Activated T-helper 2 cell treated with anti-CD3 and anti-CD28 coated beads, Interferon-gamma antibody, Interleukin-2, Interleukin-4, amounts not matched to agents 10 μg/mL and 5 μg/mL and 100 μg/mL, durations not matched to agents 14 hours and 24 hours and 36 hours (primary cell): ENCODE measurements at regions of chr20 and their contacts with region 1.

Region 1: DNA sequence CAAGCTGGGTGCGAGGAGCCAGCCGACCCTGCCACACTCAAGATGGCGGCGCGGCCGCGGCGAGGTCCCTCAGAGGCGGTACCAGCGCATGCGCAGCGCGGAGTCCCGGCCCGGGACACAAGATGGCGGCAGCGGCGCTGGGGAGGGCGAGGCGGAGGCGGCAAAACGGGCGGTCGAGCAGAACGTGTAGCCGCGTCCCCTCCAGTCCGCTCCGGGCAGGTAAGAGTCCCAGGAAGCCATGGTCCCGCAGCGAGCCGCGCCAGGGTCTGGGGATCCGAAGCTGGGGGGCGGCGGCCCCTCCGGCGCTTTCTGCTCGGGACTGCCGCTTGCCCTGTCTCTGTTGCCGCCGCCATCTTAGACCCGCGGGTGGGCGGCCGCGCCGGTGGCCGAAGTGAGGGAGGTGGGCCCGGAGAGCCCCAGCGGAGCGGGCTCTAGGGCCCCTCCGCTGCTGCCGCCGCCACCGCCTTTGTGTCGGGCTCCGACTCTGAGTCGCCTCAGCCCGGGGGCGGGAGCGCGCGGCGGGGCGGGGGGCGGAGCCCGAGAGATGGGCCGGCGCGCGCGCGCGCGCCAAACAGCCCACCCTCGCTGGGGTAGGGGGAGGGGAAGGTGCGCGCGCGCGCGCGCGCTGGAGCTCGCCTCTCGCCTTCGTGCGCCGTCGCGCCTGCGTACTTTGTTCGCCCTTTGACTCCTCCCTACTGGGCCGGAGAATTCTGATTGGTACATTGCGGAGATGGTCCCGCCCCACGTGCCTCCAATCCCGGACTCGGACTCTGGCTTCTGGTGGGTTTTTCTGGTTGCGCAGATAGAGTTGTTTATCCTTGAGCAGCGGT is at the start of gene PCIF1:
- DNase-seq: peak; percentile 97
- H3K4me3 Mint-ChIP-seq: peak within 1 kb of the TSS; percentile 92
- H3K27ac Mint-ChIP-seq: peak within 1 kb of the TSS; percentile 94
- H3K4me1 Mint-ChIP-seq: peaks cover 25% of the 10 kb centered on the region
- H3K27me3 Mint-ChIP-seq: no peaks in the 10 kb centered on the region
- total RNA-seq, gene PCIF1: 27.5 and 28.6 TPM in 2 replicates

Region 2: DNA sequence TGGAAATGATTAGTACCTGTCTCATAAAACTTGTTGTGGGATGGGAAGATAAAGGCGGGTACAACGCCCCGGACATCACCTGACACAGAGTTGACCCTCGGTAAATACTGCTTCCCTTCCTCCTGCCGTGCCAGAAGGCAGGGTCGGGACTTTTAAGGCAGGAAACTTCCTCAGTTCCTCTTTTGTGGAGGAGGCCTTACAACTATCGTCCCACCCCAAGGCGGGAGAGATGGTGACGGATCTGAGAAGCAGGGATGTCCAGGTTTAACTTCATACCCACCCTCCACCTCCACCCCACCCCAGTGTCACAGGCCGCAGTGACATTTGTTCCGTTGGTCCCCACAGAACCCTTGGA is 142.5 kb before region 1 on chr20:
- intact Hi-C with region 1: loop called (anchors 1 kb)
- DNase-seq: no peak
- H3K4me3 Mint-ChIP-seq: peak overlapping the region; percentile 85
- H3K27ac Mint-ChIP-seq: peak overlapping the region; percentile 35
- H3K4me1 Mint-ChIP-seq: peaks cover 13% of the 10 kb centered on the region
- H3K27me3 Mint-ChIP-seq: no peaks in the 10 kb centered on the region

Region 3: GRCh38 chr20:45812157-45813020 is 122.4 kb before region 1 on chr20 and contains the start of gene UBE2C:
- intact Hi-C with region 1: loop called (anchors 1 kb)
- DNase-seq: peak; percentile 96
- H3K4me3 Mint-ChIP-seq: peak within 1 kb of the TSS; percentile 90
- H3K27ac Mint-ChIP-seq: peak within 1 kb of the TSS; percentile 80
- H3K4me1 Mint-ChIP-seq: peaks cover 24% of the 10 kb centered on the region
- H3K27me3 Mint-ChIP-seq: no peaks in the 10 kb centered on the region
- total RNA-seq, gene UBE2C: 142 and 145 TPM in 2 replicates

Region 4: GRCh38 chr20:45823949-45824835 is 110.6 kb before region 1 on chr20:
- intact Hi-C with region 1: no loop called
- DNase-seq: peak; percentile 22
- H3K4me3 Mint-ChIP-seq: peak overlapping the region; percentile 51
- H3K27ac Mint-ChIP-seq: peak overlapping the region; percentile 20
- H3K4me1 Mint-ChIP-seq: peaks cover 11% of the 10 kb centered on the region
- H3K27me3 Mint-ChIP-seq: peaks cover 33% of the 10 kb centered on the region

Region 5: GRCh38 chr20:45890985-45891983 is 43.5 kb before region 1 on chr20 and contains the starts of genes CTSA and NEURL2:
- intact Hi-C with region 1: loop called (anchors 2 kb)
- DNase-seq: peak; percentile 78
- H3K4me3 Mint-ChIP-seq: peak within 1 kb of the TSS; percentile 87
- H3K27ac Mint-ChIP-seq: peak within 1 kb of the TSS; percentile 84
- H3K4me1 Mint-ChIP-seq: peaks cover 25% of the 10 kb centered on the region
- H3K27me3 Mint-ChIP-seq: no peaks in the 10 kb centered on the region
- total RNA-seq, gene CTSA: 49.0 and 51.9 TPM in 2 replicates
- total RNA-seq, gene NEURL2: 2.0 and 3.3 TPM in 2 replicates

Region 6: GRCh38 chr20:45910670-45911485 is 23.9 kb before region 1 on chr20:
- intact Hi-C with region 1: loop called (anchors 1 kb)
- DNase-seq: peak; percentile 89
- H3K4me3 Mint-ChIP-seq: peak overlapping the region; percentile 72
- H3K27ac Mint-ChIP-seq: peak overlapping the region; percentile 85
- H3K4me1 Mint-ChIP-seq: peaks cover 7% of the 10 kb centered on the region
- H3K27me3 Mint-ChIP-seq: peaks cover 6% of the 10 kb centered on the region